ENCODE measurements at regions of chr2 and their contacts with region 1.

Region 1: DNA sequence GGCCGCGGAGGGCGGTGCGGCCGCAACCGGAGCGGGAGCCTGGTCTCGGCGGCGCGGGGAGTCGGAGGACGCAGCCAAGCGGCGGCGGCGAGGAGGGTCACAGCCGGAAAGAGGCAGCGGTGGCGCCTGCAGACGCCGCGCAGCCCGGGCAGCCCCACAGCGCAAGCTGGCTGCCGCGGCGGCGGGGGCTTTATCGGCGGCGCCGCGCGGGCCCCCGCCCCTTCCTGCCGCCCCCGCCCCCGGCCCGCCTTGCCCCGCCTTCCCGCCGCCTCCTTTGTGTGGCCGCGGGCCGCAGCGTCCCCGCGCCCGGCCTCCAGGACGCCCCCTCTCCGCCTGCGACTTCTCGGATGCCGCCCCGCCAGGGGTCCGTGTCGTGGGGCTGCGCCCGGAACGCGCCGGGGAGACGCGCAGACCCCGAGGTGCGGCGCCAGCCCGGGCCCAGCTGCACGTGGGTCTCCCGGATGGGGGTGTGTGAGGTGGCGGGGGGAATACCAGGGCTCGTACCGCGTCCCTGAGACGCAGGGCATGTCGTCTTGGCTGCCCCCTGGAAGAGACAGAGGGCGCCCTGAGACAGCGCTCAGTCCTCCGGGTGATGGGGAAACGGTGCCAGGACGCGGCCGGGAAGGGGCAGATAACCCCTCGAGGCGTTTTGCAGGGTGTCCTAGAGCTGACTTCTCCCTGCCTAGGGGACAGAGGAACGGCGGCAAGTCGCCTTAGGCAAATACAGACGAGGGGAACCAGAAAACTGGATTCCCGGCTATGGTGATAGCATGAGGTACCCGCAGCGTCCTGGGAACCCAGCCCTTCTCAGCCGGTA is at the start of gene SERPINE2:
- DNase-seq: peak; percentile 25 to 69 (median 45)
- ATAC-seq: peak; percentile 74
- H3K4me3 ChIP-seq: peak within 1 kb of the TSS; percentile 65
- H3K4me3 Mint-ChIP-seq: peak within 1 kb of the TSS; percentile 86 to 99 (median 92)
- H3K27ac ChIP-seq: peak within 1 kb of the TSS; percentile 45
- H3K27ac Mint-ChIP-seq: peak within 1 kb of the TSS; percentile 37 to 88 (median 69)
- H3K4me1 ChIP-seq: peaks cover 0 to 5% of the 10 kb centered on the region in 2 donors
- H3K4me1 Mint-ChIP-seq: peaks cover 13 to 40% (median 30%) of the 10 kb centered on the region in 7 donors
- H3K27me3 ChIP-seq: peaks cover 0 to 4% of the 10 kb centered on the region in 2 donors
- H3K27me3 Mint-ChIP-seq: peaks cover 0 to 51% (median 12%) of the 10 kb centered on the region in 5 donors
- total RNA-seq, gene SERPINE2: 5.2 to 18.1 (median 8.1) TPM

Region 2: DNA sequence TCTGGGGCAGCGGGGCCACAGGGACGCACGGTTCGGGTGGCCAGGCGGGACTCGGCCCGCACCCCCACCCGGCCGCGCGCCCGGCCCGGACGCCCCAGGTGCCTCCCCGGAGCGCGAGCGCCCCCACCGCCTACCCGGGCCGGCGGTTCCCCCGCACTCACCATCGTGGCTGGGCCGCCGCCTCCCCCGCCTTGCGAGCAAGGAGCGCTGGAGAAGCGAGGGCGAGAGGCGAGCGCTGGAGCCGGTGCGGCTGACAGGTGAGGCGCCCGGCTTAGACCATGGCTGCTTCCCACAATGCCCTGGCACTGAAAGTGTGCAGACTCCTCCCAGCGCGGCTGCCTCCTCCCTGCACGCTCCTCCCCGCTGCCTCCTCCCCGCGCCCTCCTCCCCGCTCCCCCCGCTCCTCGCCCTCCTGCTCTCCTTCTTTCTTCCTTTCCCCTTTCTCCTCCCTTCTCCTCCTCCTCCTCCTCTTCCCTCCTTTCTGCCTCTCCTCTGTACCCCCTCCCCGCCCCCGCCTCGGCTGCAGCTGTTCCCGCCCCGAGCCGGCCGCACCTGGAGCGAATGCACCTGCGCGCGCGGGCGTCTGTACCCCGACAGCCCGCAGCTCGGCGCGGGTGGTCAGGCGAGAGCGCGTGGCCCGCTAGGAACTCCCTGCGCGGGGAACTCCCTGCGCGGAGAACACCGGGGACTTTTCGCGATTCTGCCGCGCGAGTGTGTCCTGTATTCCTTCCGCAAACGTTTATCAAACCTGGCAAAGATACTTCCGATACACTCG is 201.9 kb before region 1 on chr2 and contains the start of gene AP1S3:
- CTCF ChIA-PET with region 1: no interaction called
- POLR2A ChIA-PET with region 1: no interaction called
- intact Hi-C with region 1: loop called in 1 of 2 experiments (anchors 10 kb)
- DNase-seq: peak; percentile 30 to 75 (median 58)
- ATAC-seq: peak; percentile 88
- H3K4me3 ChIP-seq: peak within 1 kb of the TSS; percentile 69
- H3K4me3 Mint-ChIP-seq: peak within 1 kb of the TSS; percentile 87 to 97 (median 94)
- H3K27ac ChIP-seq: peak within 1 kb of the TSS; percentile 60
- H3K27ac Mint-ChIP-seq: peak within 1 kb of the TSS; percentile 36 to 84 (median 76)
- H3K4me1 ChIP-seq: no peaks in the 10 kb centered on the region
- H3K4me1 Mint-ChIP-seq: peaks cover 0 to 20% (median 12%) of the 10 kb centered on the region in 7 donors
- H3K27me3 ChIP-seq: no peaks in the 10 kb centered on the region
- H3K27me3 Mint-ChIP-seq: no peaks in the 10 kb centered on the region
- total RNA-seq, gene AP1S3: 0.54 to 8.2 (median 1.6) TPM

Region 3: GRCh38 chr2:224025874-224026273 is 13.5 kb before region 1 on chr2:
- CTCF ChIA-PET with region 1: no interaction called
- POLR2A ChIA-PET with region 1: interaction called, 5 read pairs
- intact Hi-C with region 1: loop called (anchors 1 kb)
- DNase-seq: peak in 8 of 9 donors; percentile 47 to 78 (median 68)
- ATAC-seq: peak; percentile 93
- H3K4me3 ChIP-seq: no peak overlapping the region
- H3K4me3 Mint-ChIP-seq: peak overlapping the region; percentile 31 to 86 (median 60)
- H3K27ac ChIP-seq: peak overlapping the region; percentile 56
- H3K27ac Mint-ChIP-seq: peak overlapping the region; percentile 85 to 96 (median 92)
- H3K4me1 ChIP-seq: peaks cover 0 to 56% of the 10 kb centered on the region in 2 donors
- H3K4me1 Mint-ChIP-seq: peaks cover 37 to 86% (median 70%) of the 10 kb centered on the region in 7 donors
- H3K27me3 ChIP-seq: no peaks in the 10 kb centered on the region
- H3K27me3 Mint-ChIP-seq: no peaks in the 10 kb centered on the region

Region 4: GRCh38 chr2:224284134-224284946 is 245.0 kb after region 1 on chr2:
- CTCF ChIA-PET with region 1: no interaction called
- POLR2A ChIA-PET with region 1: no interaction called
- intact Hi-C with region 1: loop called in 1 of 2 experiments (anchors 1 kb)
- DNase-seq: peak in 6 of 9 donors; percentile 8 to 46 (median 42)
- ATAC-seq: peak; percentile 29
- H3K4me3 ChIP-seq: no peak overlapping the region
- H3K4me3 Mint-ChIP-seq: no peak overlapping the region
- H3K27ac ChIP-seq: no peak overlapping the region
- H3K27ac Mint-ChIP-seq: no peak overlapping the region
- H3K4me1 ChIP-seq: no peaks in the 10 kb centered on the region
- H3K4me1 Mint-ChIP-seq: no peaks in the 10 kb centered on the region
- H3K27me3 ChIP-seq: no peaks in the 10 kb centered on the region
- H3K27me3 Mint-ChIP-seq: peaks cover 32 to 39% (median 37%) of the 10 kb centered on the region in 5 donors

Measured in naive thymus-derived CD4-positive, alpha-beta T cell (primary cell).